PC-3 (cell line): ENCODE measurements at regions of chr1 and their contacts with region 1.

Region 1: GRCh38 chr1:241557551-241558193 is 25.5 kb downstream of the KMO start:
- DNase-seq: no peak
- ATAC-seq: no peak
- H3K4me3 ChIP-seq: no peak overlapping the region
- H3K27ac ChIP-seq: no peak overlapping the region
- H3K4me1 ChIP-seq: peaks cover 10% of the 10 kb centered on the region; the same call in 1 of the 2 replicates
- H3K27me3 ChIP-seq: no peaks in the 10 kb centered on the region
- CTCF ChIP-seq: no peak

Region 2: DNA sequence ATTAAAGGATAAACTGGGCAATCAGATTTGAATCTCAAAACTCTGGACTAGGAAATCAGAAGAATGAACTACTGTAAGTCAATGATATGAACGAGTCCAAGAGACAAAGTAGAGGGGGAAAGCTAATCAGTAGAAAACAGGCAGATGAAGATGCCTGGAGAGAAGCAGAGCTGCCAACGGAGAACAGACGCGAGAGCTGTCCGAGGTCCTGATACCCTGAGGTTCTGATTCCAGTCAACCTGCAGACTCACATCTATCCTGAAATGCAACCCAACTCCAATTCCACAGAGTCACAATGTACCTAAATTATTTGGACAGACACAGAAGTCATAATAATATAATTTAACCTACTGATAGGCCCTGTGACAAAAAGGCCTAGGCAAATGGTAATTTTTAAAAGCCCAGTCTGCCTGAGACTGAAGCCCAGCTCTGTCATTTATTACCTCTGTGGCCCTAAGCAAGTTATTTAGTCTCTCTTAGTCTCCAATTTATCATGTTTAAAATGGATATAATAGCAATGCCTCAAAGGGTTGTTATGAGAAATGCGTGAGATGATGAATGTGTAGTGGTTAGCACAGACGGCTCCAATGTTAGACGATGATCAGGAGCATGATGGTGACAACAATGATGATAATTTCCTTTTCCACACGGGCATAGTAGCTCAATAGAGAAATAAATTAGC is 234.0 kb before region 1 on chr1:
- CTCF ChIA-PET with region 1: no interaction called
- POLR2A ChIA-PET with region 1: no interaction called
- intact Hi-C with region 1: no loop called
- DNase-seq: peak; percentile 81
- ATAC-seq: peak; percentile 73
- H3K4me3 ChIP-seq: no peak overlapping the region
- H3K27ac ChIP-seq: no peak overlapping the region
- H3K4me1 ChIP-seq: no peaks in the 10 kb centered on the region
- H3K27me3 ChIP-seq: peaks cover 60% of the 10 kb centered on the region
- CTCF ChIP-seq: no peak

Region 3: DNA sequence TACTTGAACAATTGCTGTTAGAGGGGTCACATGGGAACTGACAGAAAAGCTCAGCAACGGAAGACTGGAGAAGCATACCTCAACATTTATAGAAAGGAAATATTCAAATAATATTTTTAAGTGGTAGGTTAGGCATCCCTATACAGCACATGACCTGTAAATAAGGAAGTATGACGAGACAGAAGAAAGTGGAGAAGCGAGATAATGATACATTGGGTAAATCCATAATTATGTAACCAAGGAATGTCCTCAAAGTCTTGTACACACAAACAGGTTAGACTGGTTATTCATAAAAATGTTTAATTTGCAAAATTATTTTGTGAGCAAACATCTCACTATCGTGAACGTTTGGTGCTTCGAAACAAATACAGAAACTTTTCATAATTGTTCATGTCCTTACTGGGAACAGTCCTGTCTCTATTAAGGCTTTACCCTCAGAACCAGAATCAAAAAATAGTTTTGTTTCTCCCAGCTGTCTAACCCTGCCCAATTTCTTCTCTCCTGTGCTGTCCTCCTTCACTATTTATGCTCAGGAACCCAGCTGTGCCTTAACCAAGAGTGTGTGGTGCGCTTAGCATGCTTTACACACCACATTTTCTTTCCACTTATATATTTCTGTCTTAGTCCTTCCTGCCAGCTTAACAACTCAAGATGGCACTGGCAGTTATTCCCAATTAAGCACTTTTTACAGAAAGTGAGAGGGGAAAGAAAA is 15.3 kb before region 1 on chr1:
- CTCF ChIA-PET with region 1: no interaction called
- POLR2A ChIA-PET with region 1: no interaction called
- intact Hi-C with region 1: loop called (anchors 1 kb)
- DNase-seq: peak; percentile 89
- ATAC-seq: peak; percentile 94
- H3K4me3 ChIP-seq: peak overlapping the region; percentile 38
- H3K27ac ChIP-seq: peak overlapping the region; percentile 61
- H3K4me1 ChIP-seq: peaks cover 16% of the 10 kb centered on the region
- H3K27me3 ChIP-seq: no peaks in the 10 kb centered on the region
- CTCF ChIP-seq: no peak

Region 4: DNA sequence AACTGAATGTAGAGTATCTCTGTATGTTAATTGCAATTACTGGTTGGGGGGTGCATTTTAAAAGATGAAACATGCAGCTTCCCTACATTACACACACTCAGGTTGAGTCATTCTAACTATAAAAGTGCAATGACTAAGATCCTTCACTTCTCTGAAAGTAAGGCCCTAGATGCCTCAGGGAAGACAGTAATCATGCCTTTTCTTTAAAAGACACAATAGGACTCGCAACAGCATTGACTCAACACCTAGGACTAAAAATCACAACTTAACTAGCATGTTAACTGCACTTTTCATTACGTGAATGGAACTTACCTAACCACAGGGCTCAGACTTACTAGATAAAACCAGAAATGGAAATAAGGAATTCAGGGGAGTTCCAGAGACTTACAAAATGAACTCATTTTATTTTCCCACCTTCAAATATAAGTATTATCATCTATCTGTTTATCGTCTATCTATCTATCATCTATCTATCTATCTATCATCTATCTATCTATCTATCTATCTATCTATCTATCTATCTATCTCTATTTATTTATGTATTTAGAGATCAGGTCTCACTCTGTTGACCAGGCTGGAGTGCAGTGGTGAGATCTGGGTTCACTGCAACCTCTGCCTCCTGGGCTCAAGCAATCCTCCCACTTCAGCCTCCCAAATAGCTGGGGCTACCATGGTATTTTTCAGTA is 34.7 kb after region 1 on chr1:
- CTCF ChIA-PET with region 1: no interaction called
- POLR2A ChIA-PET with region 1: no interaction called
- intact Hi-C with region 1: loop called (anchors 1 kb)
- DNase-seq: peak; percentile 100
- ATAC-seq: peak; percentile 82
- H3K4me3 ChIP-seq: peak overlapping the region; percentile 20
- H3K27ac ChIP-seq: peak overlapping the region; percentile 89
- H3K4me1 ChIP-seq: peaks cover 43% of the 10 kb centered on the region
- H3K27me3 ChIP-seq: no peaks in the 10 kb centered on the region
- CTCF ChIP-seq: no peak

Region 5: DNA sequence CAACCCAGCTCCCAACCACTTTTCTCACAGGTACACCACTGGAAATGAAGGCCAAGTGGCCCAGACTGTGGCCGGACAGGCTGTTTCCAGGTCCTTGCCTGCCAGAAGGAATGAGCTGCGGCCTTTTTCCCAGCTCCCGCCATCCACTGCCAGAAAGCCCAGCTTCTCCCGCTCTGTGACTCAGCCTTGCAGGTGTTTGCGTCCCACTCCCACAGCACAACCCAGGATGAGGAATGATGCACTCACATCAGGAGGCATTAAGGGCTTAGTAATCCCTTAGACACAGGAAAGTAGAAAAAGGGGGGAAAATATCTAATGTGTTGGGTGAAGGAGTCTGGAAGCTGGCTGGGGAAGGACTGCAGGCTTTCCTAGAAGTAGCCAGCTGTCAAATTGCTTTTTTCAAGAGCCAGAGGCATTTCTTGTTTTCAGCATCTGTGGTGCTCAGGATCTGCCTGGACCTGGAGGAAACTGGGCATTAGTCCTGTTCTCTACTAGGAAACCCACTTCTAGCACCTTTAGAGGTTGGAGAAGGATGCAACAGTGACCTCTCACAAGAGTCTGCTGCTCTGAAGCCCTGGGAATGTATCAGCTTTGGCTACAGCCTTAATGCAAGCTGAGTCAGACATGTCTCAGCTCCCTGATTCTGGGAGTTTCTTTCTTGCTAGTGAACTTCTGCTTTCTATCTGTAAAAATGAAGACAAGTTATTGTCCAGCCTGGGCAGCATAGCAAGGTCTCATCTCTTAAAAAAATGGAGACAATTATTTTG is 454.4 kb after region 1 on chr1:
- CTCF ChIA-PET with region 1: no interaction called
- POLR2A ChIA-PET with region 1: interaction called, 20 read pairs
- intact Hi-C with region 1: no loop called
- DNase-seq: peak; percentile 68
- ATAC-seq: peak; percentile 83
- H3K4me3 ChIP-seq: no peak overlapping the region
- H3K27ac ChIP-seq: peak overlapping the region; percentile 46
- H3K4me1 ChIP-seq: peaks cover 10% of the 10 kb centered on the region; the same call in 1 of the 2 replicates
- H3K27me3 ChIP-seq: no peaks in the 10 kb centered on the region
- CTCF ChIP-seq: no peak